ENCODE measurements at regions of chr1 and their contacts with region 1.

Region 1: GRCh38 chr1:233884461-233885151 is 19.9 kb upstream of the SLC35F3 start:
- DNase-seq: no peak
- ATAC-seq: no peak

Region 2: GRCh38 chr1:232477728-232478127 is 1406.9 kb before region 1 on chr1:
- intact Hi-C with region 1: no loop called
- DNase-seq: no peak
- ATAC-seq: peak; percentile 84

Region 3: GRCh38 chr1:234000557-234001041 is 116.0 kb after region 1 on chr1:
- intact Hi-C with region 1: loop called (anchors 5 kb)
- DNase-seq: no peak
- ATAC-seq: no peak